Activated T-helper 2 cell treated with anti-CD3 and anti-CD28 coated beads, Interferon-gamma antibody, Interleukin-2, Interleukin-4, amounts not matched to agents 10 μg/mL and 5 μg/mL and 100 μg/mL, durations not matched to agents 14 hours and 24 hours and 36 hours (primary cell): ENCODE measurements at regions of chr12 and their contacts with region 1.

Region 1: GRCh38 chr12:55629058-55629841 is 7.4 kb upstream of the OR10P1 start:
- DNase-seq: no peak
- H3K4me3 Mint-ChIP-seq: peak overlapping the region; percentile 9
- H3K27ac Mint-ChIP-seq: peak overlapping the region; percentile 79
- H3K4me1 Mint-ChIP-seq: peaks cover 28% of the 10 kb centered on the region
- H3K27me3 Mint-ChIP-seq: no peaks in the 10 kb centered on the region

Region 2: DNA sequence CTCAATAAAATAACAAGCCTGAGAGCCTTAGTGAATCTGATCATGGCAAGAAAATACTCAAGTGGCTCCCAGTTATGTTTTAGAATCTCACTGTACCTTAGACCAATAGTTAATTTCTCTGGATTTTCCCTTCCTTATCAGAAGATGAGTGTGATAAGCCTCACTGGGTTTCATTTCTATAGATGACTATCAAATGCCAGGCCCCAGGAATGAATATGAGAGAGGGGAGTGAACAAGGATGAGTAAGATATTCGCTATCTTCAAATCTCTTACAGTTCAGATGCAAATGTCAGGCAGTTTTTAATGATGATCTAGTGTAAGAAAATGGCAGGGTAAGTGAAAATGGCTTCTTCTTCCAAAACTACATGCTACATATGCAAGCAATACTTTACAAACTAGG is 18.7 kb before region 1 on chr12:
- intact Hi-C with region 1: loop called (anchors 1 kb)
- DNase-seq: no peak
- H3K4me3 Mint-ChIP-seq: no peak overlapping the region
- H3K27ac Mint-ChIP-seq: peak overlapping the region; percentile 36
- H3K4me1 Mint-ChIP-seq: peaks cover 24% of the 10 kb centered on the region
- H3K27me3 Mint-ChIP-seq: peaks cover 10% of the 10 kb centered on the region

Region 3: DNA sequence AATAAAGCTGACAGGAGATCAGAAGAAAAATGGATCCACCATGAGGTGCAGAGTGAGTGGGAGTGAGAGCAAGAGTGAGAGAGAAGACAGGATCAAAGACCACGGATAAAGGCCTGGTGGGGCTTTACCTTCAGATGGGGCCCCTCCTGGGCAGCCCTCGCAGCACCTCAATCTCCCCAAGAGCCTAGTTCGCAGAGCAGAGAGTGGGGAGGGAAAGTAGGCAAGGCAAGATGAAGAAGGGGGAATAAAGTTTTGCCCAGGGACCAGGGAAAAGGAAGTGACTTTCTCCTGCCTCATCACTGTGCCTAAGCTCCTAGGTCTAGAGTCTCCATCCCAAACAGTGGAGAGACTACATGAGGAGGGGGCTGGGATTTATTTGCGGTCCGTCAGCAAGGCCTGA is 17.8 kb after region 1 on chr12:
- intact Hi-C with region 1: loop called (anchors 2 kb)
- DNase-seq: no peak
- H3K4me3 Mint-ChIP-seq: no peak overlapping the region
- H3K27ac Mint-ChIP-seq: no peak overlapping the region
- H3K4me1 Mint-ChIP-seq: peaks cover 27% of the 10 kb centered on the region
- H3K27me3 Mint-ChIP-seq: no peaks in the 10 kb centered on the region

Region 4: DNA sequence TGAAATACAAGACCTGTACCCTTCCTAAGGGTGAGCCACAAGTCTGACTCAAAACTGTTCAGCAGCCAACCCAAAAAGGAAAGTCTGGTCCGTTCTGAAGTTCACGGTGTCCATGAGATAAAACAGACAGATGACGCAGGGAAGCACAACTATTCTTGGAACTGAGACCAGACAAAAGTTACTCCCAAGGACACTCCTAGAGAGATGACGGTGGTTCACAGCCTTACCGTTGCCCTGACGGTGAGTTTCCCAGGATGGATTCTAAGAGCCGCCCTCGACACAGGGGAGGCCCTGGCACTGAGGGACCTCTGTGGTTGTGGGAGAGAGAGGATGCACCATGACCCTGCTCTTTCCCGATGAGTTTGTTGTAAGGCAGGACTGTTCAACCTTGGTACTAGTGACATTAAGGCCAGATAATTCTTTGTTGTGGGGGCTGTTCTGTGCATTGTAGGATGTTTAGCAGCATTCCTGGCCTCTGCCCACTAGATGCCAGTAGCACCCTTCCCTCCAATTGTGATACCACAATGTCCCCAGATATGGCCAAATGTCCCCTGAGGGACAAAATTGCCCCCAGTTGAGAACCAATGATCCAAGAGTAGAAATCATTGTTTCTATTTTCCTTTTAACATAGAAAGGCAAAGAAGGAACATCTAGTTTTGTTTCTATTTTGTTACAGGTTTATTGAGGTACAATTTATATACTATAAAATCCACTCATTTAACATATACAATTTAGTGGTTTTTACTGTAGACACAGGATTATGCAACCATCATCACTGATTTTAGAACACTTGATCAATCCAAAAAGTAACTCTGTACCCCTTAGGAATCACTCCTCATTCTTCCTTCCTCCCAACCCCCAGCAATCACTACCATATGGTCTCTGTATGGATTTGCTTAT is 30.5 kb after region 1 on chr12:
- intact Hi-C with region 1: loop called (anchors 2 kb)
- DNase-seq: no peak
- H3K4me3 Mint-ChIP-seq: no peak overlapping the region
- H3K27ac Mint-ChIP-seq: no peak overlapping the region
- H3K4me1 Mint-ChIP-seq: no peaks in the 10 kb centered on the region
- H3K27me3 Mint-ChIP-seq: peaks cover 25% of the 10 kb centered on the region

Region 5: GRCh38 chr12:56224102-56224701 is 595.0 kb after region 1 on chr12 and contains the start of gene NABP2:
- intact Hi-C with region 1: no loop called
- DNase-seq: peak; percentile 94
- H3K4me3 Mint-ChIP-seq: peak within 1 kb of the TSS; percentile 99
- H3K27ac Mint-ChIP-seq: peak within 1 kb of the TSS; percentile 76
- H3K4me1 Mint-ChIP-seq: peaks cover 41% of the 10 kb centered on the region
- H3K27me3 Mint-ChIP-seq: no peaks in the 10 kb centered on the region
- total RNA-seq, gene NABP2: 77.3 and 86.8 TPM in 2 replicates